Transverse colon (tissue), 4 donors: ENCODE measurements at regions of chr17 and their contacts with region 1.

Region 1: DNA sequence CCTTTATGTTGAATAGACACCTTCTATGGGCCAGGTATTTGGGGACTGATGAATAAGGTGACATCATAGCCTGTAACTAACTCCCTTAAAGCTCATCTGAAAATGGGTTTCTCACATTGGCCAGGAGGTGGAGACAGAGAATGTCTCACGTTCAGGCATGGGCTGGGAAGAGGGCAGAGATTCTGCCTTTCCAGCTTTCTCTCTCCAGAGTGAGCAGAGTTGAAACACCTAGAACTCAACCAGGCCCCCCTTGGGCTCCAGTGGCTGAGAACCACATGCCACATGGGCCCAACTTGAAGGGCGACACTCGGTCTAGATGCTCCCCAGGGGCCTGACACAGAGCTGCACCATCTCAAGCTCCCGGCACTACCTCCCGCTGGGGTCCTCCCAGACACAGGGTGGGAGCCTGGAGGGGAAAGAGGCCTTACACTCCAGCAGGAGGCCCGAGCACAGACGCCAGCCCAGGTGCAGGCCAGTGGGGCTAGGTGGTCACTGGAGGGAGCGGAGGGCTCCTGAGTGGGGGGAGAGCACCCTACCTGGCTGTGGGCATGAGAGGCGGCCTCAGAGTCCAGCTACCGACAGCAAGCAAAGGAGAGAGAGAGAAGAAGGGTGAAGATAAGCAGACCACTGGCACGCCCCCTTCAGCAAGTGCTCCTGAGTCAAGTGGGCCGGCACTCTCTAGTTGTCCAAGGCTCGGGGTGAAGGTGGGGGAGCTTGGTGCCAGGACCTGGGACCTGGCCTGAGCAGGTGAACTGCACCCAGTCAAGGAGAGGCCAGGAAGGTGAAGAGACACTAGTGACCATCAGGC is 55.9 kb downstream of the MYO18A start:
- DNase-seq: no peak
- H3K4me3 ChIP-seq: no peak overlapping the region
- H3K27ac ChIP-seq: peak overlapping the region in 1 of 4 donors; percentile 40
- H3K4me1 ChIP-seq: peaks cover 0 to 25% (median 16%) of the 10 kb centered on the region in 4 donors
- H3K27me3 ChIP-seq: no peaks in the 10 kb centered on the region
- CTCF ChIP-seq: peak; percentile 32 to 62 (median 55)
- EP300 ChIP-seq: no peak
- POLR2A ChIP-seq: no peak

Region 2: GRCh38 chr17:28967221-28968140 is 156.8 kb before region 1 on chr17:
- in situ Hi-C with region 1: loop called in 2 of 4 experiments (anchors 10 kb)
- intact Hi-C with region 1: no loop called
- DNase-seq: no peak
- H3K4me3 ChIP-seq: no peak overlapping the region
- H3K27ac ChIP-seq: no peak overlapping the region
- H3K4me1 ChIP-seq: no peaks in the 10 kb centered on the region
- H3K27me3 ChIP-seq: peaks cover 10% of the 10 kb centered on the region
- CTCF ChIP-seq: no peak
- EP300 ChIP-seq: no peak
- POLR2A ChIP-seq: no peak

Region 3: DNA sequence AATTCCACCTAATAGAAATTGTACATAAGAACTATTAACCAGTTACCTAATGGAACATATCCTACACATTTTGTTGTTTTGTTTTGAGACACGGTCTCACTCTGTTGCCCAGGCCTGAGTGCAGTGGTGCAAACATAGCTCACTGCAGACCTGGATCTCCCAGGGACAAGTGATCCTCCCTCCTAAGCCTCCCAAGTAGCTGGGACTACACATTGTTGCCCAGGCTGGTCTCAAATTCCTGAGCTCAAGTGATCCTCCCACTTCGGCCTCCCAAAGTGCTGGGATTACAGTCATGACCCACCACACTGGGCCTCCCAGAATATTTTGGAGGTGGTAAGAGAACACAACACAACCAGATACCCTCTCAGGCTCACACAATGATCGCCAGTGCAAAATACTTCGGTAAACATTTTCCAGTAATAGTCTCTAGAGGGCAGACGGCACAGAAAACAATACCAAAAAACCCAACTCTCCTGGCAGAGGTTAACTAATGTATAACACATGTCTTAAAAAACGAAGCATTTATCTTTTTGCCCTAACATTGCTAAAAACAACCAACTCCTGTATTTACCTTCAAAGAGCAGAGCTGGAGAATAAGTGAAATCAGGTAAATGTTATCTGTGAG is 159.1 kb after region 1 on chr17:
- in situ Hi-C with region 1: loop called in 2 of 4 experiments (anchors 10 to 25 kb)
- intact Hi-C with region 1: no loop called
- DNase-seq: no peak
- H3K4me3 ChIP-seq: no peak overlapping the region
- H3K27ac ChIP-seq: no peak overlapping the region
- H3K4me1 ChIP-seq: peaks cover 6 to 52% (median 17%) of the 10 kb centered on the region in 4 donors
- H3K27me3 ChIP-seq: no peaks in the 10 kb centered on the region
- CTCF ChIP-seq: no peak
- EP300 ChIP-seq: no peak
- POLR2A ChIP-seq: no peak